ENCODE measurements at regions of chr11 and their contacts with region 1.

Region 1: GRCh38 chr11:78228467-78228866 is 39.7 kb downstream of the USP35 start:
- DNase-seq: peak; percentile 83
- H3K4me3 Mint-ChIP-seq: no peak overlapping the region
- H3K27ac Mint-ChIP-seq: peak overlapping the region; percentile 31
- H3K4me1 Mint-ChIP-seq: peaks cover 59% of the 10 kb centered on the region
- H3K27me3 Mint-ChIP-seq: no peaks in the 10 kb centered on the region

Region 2: DNA sequence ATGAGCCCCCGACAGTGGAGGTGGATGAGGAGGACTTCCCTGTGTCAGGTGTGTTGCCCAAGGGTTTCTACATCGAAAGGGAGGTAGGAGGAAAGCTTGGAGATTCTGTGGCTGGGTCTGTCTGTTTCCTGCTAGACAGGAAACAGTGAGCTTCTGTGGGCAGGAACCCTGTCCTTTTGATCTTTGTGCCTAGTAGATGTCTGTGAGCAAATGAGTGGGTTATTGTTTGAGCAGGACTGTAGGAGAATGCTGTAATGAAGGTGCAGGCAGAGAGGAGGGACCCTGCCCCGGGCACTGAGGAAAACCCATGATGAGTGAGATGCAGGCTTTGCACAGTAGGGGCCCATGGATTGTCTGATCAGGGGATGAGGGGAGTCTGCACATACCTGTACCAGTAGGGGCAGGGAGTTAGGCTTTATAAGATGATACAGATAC is 25.7 kb before region 1 on chr11:
- intact Hi-C with region 1: loop called (anchors 2 kb)
- DNase-seq: peak; percentile 88
- H3K4me3 Mint-ChIP-seq: peak overlapping the region; percentile 81
- H3K27ac Mint-ChIP-seq: peak overlapping the region; percentile 95
- H3K4me1 Mint-ChIP-seq: peaks cover 43% of the 10 kb centered on the region
- H3K27me3 Mint-ChIP-seq: no peaks in the 10 kb centered on the region

Region 3: DNA sequence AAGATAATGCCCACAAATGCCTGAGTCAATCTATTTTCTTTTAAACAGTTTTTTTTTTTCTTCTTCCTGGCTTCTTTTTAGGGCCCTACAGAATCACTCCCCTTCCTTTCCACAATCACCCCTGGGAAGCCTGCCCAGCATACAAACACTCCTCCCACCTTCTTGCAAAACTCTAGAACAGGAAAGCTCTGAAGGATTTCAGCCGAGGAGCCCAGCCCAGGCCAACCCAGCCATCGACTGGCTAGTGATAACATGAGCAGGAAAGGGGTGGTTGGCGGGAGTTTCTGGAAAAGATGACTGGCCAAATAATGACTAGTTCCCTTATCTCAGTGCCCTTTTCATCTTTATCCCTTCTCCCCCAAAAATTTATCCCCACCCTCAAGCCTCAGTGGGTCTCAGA is 28.5 kb after region 1 on chr11:
- intact Hi-C with region 1: no loop called
- DNase-seq: no peak
- H3K4me3 Mint-ChIP-seq: no peak overlapping the region
- H3K27ac Mint-ChIP-seq: no peak overlapping the region
- H3K4me1 Mint-ChIP-seq: peaks cover 5% of the 10 kb centered on the region
- H3K27me3 Mint-ChIP-seq: no peaks in the 10 kb centered on the region

Region 4: DNA sequence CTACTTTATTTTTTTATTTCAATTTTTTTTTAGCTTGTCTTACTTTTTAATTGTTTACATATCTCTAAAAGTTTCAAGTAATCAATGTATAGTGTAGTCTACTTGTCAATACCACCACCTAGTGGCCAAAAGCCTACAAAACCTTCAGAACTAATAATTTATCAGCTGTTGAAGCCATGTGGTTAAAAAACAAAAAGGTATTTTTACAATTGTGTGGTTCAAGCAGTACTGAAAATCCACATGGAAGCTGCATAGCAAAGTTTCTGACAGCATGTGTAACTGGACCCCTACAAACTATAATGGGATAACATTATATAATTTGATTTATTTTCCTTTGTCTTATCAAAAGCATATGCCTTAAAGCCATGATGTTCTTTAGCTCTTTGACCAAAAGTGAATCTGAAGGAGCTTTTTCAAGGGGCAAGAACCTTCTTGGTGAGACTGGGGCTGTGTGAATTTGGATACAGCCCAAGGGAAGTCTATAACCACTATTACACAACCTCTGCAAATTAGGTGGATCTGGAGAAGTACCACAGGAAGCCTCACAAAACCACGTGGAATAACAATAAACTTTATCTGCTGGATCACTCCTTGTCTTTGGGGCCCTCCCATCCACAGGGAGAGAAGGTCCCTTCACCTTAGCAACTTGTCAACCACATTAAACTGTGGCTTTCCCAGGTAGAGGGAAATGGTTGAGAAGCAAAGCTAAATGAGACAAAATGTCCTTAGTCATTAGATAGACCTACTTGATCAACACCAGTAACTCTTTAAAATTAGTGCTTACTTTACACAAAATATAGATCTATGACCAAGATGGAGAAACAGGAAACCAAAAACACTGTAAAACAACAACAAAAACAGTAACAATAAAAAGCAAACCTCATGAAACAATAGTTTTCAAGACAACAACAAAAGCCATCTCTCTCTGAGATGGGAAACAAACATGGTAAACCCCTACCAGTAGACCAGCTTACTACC is 336.3 kb after region 1 on chr11:
- intact Hi-C with region 1: loop called (anchors 1 kb)
- DNase-seq: peak; percentile 89
- H3K4me3 Mint-ChIP-seq: no peak overlapping the region
- H3K27ac Mint-ChIP-seq: peak overlapping the region; percentile 5
- H3K4me1 Mint-ChIP-seq: peaks cover 42% of the 10 kb centered on the region
- H3K27me3 Mint-ChIP-seq: no peaks in the 10 kb centered on the region

Measured in activated CD4-positive, alpha-beta T cell treated with anti-CD3 and anti-CD28 coated beads, Interleukin-2, amount 10 ng/mL, durations not matched to agents 24 days and 14 days (primary cell).